ENCODE measurements at regions of chr6 and their contacts with region 1.

Region 1: GRCh38 chr6:26532699-26533531 is 5.3 kb upstream of the HMGN4 start:
- DNase-seq: peak; percentile 68 to 97 (median 94)
- ATAC-seq: peak; percentile 49 to 51
- H3K4me3 Mint-ChIP-seq: peak overlapping the region; percentile 91 to 99 (median 97)
- H3K27ac Mint-ChIP-seq: peak overlapping the region; percentile 91 to 99 (median 94)
- H3K4me1 Mint-ChIP-seq: peaks cover 36 to 67% (median 62%) of the 10 kb centered on the region in 4 donors
- H3K27me3 Mint-ChIP-seq: peaks cover 0 to 12% (median 0%) of the 10 kb centered on the region in 5 donors

Region 2: DNA sequence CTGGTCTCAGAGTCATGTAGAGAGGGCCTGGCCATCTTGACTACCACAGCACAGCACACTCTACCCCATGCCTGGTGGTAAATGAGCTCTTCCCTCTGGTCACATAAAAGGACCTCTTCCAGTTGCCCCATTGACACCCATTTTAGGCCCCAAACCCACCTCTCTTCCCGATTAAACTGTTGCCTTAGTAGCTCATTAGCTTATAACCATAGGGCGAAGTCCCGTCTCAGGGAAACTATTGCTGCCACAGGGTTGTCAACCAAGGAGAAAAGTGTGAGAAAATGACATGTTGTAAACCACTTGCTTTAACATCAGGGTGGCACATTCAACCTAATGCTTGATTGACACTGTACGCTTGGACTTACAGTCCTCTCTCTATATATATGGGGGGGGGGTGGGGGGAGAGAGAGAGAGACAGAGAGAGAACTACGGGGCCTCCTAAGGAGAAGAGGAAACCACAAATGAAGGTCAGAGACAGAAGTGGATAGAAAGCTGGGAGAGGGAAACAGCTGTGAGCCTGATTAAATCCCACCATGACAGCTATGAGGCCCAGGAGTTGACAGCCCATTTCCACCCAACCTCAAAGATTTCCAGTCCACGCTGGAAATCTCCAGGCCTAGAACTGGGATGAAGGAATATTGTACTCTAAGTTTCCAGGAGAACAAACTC is 47.7 kb before region 1 on chr6:
- POLR2A ChIA-PET with region 1: no interaction called
- DNase-seq: no peak
- ATAC-seq: no peak
- H3K4me3 Mint-ChIP-seq: no peak overlapping the region
- H3K27ac Mint-ChIP-seq: no peak overlapping the region
- H3K4me1 Mint-ChIP-seq: peaks cover 0 to 2% (median 0%) of the 10 kb centered on the region in 4 donors
- H3K27me3 Mint-ChIP-seq: no peaks in the 10 kb centered on the region

Region 3: GRCh38 chr6:26520853-26521599 is 11.9 kb before region 1 on chr6:
- POLR2A ChIA-PET with region 1: interaction called, 59 read pairs
- DNase-seq: peak; percentile 76 to 92 (median 86)
- ATAC-seq: peak; percentile 70 to 82
- H3K4me3 Mint-ChIP-seq: peak overlapping the region; percentile 73 to 97 (median 89)
- H3K27ac Mint-ChIP-seq: peak overlapping the region; percentile 67 to 98 (median 91)
- H3K4me1 Mint-ChIP-seq: peaks cover 13 to 41% (median 34%) of the 10 kb centered on the region in 4 donors
- H3K27me3 Mint-ChIP-seq: peaks cover 0 to 3% (median 0%) of the 10 kb centered on the region in 5 donors

Measured in naive thymus-derived CD8-positive, alpha-beta T cell (primary cell).